ENCODE measurements at regions of chr19 and their contacts with region 1.

Region 1: GRCh38 chr19:17405250-17406038 is at the start of gene BST2:
- DNase-seq: peak; percentile 71
- ATAC-seq: peak; percentile 83
- H3K4me3 Mint-ChIP-seq: peak within 1 kb of the TSS; percentile 89
- H3K27ac Mint-ChIP-seq: peak within 1 kb of the TSS; percentile 91
- H3K4me1 Mint-ChIP-seq: peaks cover 27% of the 10 kb centered on the region
- H3K27me3 Mint-ChIP-seq: no peaks in the 10 kb centered on the region
- total RNA-seq, gene BST2: 197 to 201 TPM

Region 2: DNA sequence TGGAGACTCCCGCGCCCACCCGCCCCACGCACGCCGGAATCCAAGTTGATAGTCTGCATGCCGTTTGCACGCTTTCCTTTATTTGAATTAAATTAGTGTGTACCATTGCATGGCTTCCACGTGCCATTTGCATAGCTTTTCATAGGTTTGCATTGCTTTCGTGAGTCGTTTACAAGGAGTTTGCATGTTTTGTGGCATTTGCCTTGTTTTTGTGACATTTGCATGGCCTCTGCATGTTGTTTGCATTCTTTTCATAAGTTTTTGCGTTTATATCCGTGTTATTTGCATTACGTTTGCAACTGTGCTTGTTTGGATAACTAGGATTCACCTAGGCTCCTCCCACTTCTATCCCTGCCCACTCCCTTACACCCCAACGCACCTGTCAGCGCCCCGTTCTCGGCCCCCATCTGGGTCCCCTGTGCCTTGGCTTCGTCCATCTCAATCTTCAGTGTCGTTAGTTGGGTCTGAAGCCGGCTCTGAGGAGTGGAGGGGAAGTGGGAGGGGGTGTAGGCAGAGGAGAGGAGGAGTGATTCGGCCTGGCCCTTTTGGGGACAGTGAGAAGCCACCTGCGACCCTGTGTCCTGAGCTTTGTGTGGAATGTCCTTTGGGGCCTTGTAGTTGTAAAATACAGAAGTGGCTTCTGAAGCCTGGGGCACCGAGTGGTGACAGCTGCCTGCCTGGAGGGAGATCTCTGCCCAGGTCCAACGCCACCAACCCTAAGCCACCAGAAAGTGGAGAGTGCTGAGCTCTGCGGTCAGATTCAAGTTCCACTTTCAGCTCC is 13.9 kb before region 1 on chr19:
- POLR2A ChIA-PET with region 1: interaction called, 13 read pairs
- DNase-seq: no peak
- ATAC-seq: no peak
- H3K4me3 Mint-ChIP-seq: peak overlapping the region; percentile 58
- H3K27ac Mint-ChIP-seq: no peak overlapping the region
- H3K4me1 Mint-ChIP-seq: peaks cover 21% of the 10 kb centered on the region
- H3K27me3 Mint-ChIP-seq: peaks cover 29% of the 10 kb centered on the region

Region 3: GRCh38 chr19:17419621-17420466 is 14.4 kb after region 1 on chr19 and contains the start of gene MVB12A:
- POLR2A ChIA-PET with region 1: interaction called, 64 read pairs
- DNase-seq: peak; percentile 94
- ATAC-seq: peak; percentile 84
- H3K4me3 Mint-ChIP-seq: peak within 1 kb of the TSS; percentile 96
- H3K27ac Mint-ChIP-seq: peak within 1 kb of the TSS; percentile 93
- H3K4me1 Mint-ChIP-seq: peaks cover 10% of the 10 kb centered on the region
- H3K27me3 Mint-ChIP-seq: no peaks in the 10 kb centered on the region
- total RNA-seq, gene MVB12A: 34.1 to 40.3 TPM

Measured in activated naive CD8-positive, alpha-beta T cell treated with anti-CD3 and anti-CD28 coated beads, Interleukin-2, amount 10 ng/mL, durations not matched to agents 7 days and 5 days (primary cell).